MCF 10A (cell line): ENCODE measurements at regions of chr12 and their contacts with region 1.

Region 1: GRCh38 chr12:121793838-121794533 is 498 bp upstream of the RHOF start:
- DNase-seq: peak; percentile 92
- H3K4me3 Mint-ChIP-seq: peak overlapping the region; percentile 69
- H3K27ac Mint-ChIP-seq: peak overlapping the region; percentile 90
- H3K4me1 Mint-ChIP-seq: peaks cover 58% of the 10 kb centered on the region
- H3K27me3 Mint-ChIP-seq: no peaks in the 10 kb centered on the region
- CTCF ChIP-seq: peak; percentile 100

Region 2: DNA sequence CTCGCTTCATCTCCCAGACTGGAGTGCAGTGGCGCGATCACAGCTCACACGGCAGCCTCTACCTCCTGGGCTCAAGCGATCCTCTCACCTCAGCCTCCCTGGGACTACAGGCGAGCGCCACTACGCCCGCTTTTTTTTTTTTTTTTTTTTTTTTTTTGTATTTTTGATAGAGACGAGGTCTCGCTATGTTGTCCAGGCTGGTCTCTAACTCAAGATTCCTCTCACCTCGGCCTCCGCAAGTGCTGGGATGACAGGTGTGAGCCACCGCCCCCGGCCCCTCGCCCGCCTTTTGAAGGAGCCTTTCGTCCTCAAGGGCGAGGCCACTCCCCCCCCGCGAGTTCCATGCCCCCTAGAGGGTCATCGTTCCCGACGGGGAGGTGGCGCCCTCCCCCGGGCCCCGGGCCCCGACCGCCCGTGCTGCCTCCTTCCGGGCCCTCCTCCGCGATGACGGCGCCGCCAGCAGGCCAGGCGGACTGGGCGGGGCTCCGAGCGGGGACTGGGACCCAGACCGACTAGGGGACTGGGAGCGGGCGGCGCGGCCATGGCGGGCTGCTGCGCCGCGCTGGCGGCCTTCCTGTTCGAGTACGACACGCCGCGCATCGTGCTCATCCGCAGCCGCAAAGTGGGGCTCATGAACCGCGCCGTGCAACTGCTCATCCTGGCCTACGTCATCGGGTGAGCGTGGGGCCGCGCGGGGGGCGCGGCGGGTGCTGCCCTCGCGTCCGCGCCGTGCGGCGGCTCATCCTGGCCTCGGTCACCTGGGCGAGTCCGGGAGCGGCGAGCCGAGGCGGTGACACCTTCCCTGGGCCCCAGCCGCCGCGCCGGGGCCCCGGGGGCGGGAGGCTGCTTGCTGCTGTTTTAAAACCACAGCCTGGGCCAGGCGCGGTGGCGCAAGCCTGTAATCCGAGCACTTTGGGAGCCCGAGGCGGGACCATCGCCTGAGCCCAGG is 584.1 kb before region 1 on chr12 and contains the start of gene P2RX4:
- CTCF ChIA-PET with region 1: no interaction called
- POLR2A ChIA-PET with region 1: no interaction called
- intact Hi-C with region 1: no loop called
- DNase-seq: peak; percentile 83
- H3K4me3 Mint-ChIP-seq: peak within 1 kb of the TSS; percentile 72
- H3K27ac Mint-ChIP-seq: peak within 1 kb of the TSS; percentile 63
- H3K4me1 Mint-ChIP-seq: peaks cover 12% of the 10 kb centered on the region
- H3K27me3 Mint-ChIP-seq: no peaks in the 10 kb centered on the region
- CTCF ChIP-seq: peak; percentile 10
- total RNA-seq, gene P2RX4: 8.1 and 10.7 TPM in 2 replicates

Region 3: GRCh38 chr12:121427556-121428055 is 366.4 kb before region 1 on chr12:
- CTCF ChIA-PET with region 1: no interaction called
- POLR2A ChIA-PET with region 1: no interaction called
- intact Hi-C with region 1: no loop called
- DNase-seq: no peak
- H3K4me3 Mint-ChIP-seq: no peak overlapping the region
- H3K27ac Mint-ChIP-seq: no peak overlapping the region
- H3K4me1 Mint-ChIP-seq: no peaks in the 10 kb centered on the region
- H3K27me3 Mint-ChIP-seq: no peaks in the 10 kb centered on the region
- CTCF ChIP-seq: no peak

Region 4: GRCh38 chr12:121676190-121676589 is 117.8 kb before region 1 on chr12:
- CTCF ChIA-PET with region 1: no interaction called
- POLR2A ChIA-PET with region 1: no interaction called
- intact Hi-C with region 1: no loop called
- DNase-seq: no peak
- H3K4me3 Mint-ChIP-seq: no peak overlapping the region
- H3K27ac Mint-ChIP-seq: no peak overlapping the region
- H3K4me1 Mint-ChIP-seq: peaks cover 10% of the 10 kb centered on the region
- H3K27me3 Mint-ChIP-seq: no peaks in the 10 kb centered on the region
- CTCF ChIP-seq: no peak

Region 5: DNA sequence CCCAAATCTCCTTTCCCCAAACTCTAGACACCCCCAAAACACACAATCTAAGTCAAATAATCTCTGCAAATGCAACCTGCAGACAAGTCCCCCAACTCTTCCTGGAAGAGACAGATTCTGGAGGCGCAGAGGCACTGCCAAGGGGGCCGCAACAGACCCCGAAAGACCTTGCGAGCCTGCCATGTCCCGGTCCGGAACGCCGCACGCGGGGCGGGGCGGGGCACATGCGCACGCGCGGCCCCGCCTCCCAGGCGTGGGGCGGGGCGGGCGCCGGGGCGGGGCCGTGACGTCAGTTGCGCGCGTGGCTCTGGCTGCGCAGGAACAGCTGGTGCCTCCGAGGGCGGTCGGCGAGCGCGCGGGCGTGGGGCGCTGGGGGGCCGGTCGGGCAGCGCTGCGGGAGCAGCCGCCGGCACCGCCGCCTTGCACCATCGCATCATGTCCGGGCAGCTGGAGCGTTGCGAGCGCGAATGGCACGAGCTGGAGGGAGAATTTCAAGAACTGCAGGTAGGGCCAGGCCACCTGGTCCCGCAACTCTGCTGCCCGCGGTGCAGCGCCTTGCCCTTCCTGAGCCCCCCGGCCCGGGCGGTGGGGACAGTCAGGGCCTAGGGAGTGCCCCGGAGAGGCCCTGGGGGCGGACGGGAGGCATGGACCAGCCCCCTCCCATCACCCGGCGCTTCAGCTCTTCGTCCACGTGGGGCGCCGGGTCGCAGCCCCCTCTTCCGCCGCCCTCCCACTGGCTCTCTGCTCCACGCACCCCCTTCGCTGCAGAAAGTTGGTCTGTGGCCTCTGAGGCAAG is 81.3 kb before region 1 on chr12 and contains the start of gene TMEM120B:
- CTCF ChIA-PET with region 1: interaction called, 58 read pairs
- POLR2A ChIA-PET with region 1: interaction called, 26 read pairs
- intact Hi-C with region 1: no loop called
- DNase-seq: peak; percentile 70
- H3K4me3 Mint-ChIP-seq: peak within 1 kb of the TSS; percentile 95
- H3K27ac Mint-ChIP-seq: peak within 1 kb of the TSS; percentile 57
- H3K4me1 Mint-ChIP-seq: peaks cover 23% of the 10 kb centered on the region
- H3K27me3 Mint-ChIP-seq: no peaks in the 10 kb centered on the region
- CTCF ChIP-seq: no peak
- total RNA-seq, gene TMEM120B: 10.5 and 14.2 TPM in 2 replicates

Region 6: DNA sequence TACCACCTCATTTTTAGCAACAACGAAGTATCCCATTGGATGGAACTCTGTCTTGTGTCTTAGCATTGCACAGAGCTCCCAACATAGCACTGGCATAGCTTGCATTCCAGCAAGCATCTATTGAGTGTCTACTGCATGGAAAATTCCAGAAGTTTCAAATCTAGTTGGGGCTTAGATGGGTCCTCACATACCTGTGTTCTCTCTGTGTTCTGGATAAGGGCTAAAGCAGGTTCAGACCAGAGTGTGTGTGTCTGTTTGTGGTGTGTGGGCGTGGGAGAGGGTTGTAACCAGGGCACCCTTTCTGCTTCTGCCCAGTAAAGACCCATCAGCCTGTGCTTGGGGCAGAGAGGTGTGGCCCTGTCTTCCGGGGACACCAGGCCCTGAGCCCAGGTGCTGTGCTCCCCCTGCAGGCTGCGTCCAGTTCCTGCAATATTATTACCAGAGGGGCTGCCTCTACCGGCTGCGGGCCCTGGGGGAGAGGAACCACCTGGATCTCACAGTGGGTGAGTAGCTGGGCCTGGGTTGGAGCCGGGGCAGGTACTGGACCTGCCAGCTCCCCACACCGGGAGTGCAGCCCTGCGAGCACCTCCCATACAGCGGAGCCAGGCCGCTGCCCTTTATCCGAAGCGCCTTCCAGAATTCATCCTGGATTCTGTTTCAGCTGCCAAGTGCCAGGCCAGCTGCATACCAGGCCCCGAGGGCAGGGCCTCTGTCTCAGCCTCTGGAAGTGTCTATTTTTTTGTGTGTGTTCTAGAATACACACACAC is 20.8 kb before region 1 on chr12:
- CTCF ChIA-PET with region 1: interaction called, 301 read pairs
- POLR2A ChIA-PET with region 1: interaction called, 7 read pairs
- intact Hi-C with region 1: loop called (anchors 1 kb)
- DNase-seq: peak; percentile 76
- H3K4me3 Mint-ChIP-seq: no peak overlapping the region
- H3K27ac Mint-ChIP-seq: no peak overlapping the region
- H3K4me1 Mint-ChIP-seq: peaks cover 5% of the 10 kb centered on the region
- H3K27me3 Mint-ChIP-seq: no peaks in the 10 kb centered on the region
- CTCF ChIP-seq: peak; percentile 85

Region 7: DNA sequence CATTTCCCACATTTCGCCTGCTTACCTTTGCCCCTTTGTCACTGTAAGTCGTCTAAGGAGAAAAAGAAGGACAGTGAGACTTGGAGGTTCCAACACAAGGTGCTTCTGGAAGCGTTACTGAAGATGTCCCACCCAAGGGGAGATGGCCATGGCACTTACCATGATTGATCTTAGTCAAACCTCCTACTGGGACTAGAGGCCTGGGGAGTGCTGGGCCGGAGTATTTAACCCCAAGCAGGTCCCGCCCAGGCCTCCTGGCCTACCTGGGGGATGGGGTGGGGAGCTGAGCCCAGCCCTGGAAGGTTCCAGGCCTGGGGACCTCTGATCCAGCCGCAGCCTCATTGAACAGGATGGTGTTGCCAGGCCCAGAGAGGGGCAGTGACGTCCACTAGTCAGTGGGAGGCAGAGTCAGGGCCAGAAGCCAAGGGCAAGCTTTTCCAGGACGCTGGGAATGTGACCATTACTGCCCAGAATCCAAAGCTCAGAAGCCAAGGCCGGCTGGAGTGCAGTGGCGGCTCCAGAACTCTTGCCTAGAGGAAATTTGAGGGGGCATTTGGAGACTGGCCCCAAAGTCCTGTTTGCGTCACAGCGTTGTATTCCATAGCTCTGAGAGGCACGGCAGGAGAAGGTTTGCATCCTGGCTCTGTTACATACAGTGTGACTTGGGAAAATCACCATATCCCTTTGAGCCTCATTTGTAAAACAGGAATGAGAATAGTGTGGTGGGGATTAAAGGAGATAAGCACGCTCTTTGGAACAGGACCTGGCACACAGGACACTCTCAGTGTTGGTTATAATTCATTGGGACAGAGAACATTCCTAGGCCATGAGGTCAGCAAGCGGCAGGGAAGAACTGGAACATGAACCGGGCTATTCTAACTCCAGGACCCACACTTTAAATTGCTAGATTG is 64.9 kb after region 1 on chr12 and contains the start of gene HPD:
- CTCF ChIA-PET with region 1: interaction called, 11 read pairs
- POLR2A ChIA-PET with region 1: no interaction called
- intact Hi-C with region 1: no loop called
- DNase-seq: peak; percentile 78
- H3K4me3 Mint-ChIP-seq: no peak within 1 kb of the TSS
- H3K27ac Mint-ChIP-seq: no peak within 1 kb of the TSS
- H3K4me1 Mint-ChIP-seq: peaks cover 15% of the 10 kb centered on the region
- H3K27me3 Mint-ChIP-seq: no peaks in the 10 kb centered on the region
- CTCF ChIP-seq: no peak
- total RNA-seq, gene HPD: 0.21 TPM in 1 of 2 replicates, not detected in the other

Region 8: DNA sequence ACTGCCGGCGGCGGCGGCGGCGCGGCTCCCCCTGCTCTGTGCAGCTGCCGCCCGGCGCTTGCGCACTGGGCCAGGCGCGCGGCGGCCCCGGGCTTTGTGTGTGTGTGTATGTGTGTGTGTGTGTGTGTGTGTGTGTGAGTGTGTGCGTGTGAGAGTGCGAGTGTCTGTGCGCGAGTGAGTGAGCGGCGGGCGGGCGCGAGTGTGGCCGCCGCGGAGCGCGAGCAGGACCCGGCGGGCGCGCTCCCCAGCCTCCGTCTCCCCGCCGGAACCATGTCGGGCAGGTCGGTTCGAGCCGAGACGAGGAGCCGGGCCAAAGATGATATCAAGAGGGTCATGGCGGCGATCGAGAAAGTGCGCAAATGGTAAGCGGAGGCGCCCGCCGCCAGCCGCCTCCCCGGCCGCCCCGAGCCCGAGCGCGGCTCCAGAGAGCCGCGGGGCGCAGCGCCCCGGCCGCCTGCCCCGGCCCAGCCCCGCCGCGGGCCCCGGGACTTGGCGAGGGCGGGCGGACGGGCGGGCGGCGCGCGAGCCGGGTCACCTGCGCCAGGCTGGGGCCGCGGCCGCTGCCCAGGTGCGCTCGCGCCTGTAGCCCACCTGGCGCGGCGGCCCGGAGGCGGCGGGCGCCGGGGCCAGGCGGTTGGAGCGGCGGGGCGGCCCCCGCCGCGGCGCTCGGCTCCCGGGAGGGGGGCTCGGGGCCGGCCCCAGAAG is 228.0 kb after region 1 on chr12 and contains the start of gene BCL7A:
- CTCF ChIA-PET with region 1: interaction called, 12 read pairs
- POLR2A ChIA-PET with region 1: interaction called, 4 read pairs
- intact Hi-C with region 1: loop called (anchors 10 kb)
- DNase-seq: peak; percentile 60
- H3K4me3 Mint-ChIP-seq: peak within 1 kb of the TSS; percentile 94
- H3K27ac Mint-ChIP-seq: peak within 1 kb of the TSS; percentile 76
- H3K4me1 Mint-ChIP-seq: peaks cover 5% of the 10 kb centered on the region
- H3K27me3 Mint-ChIP-seq: no peaks in the 10 kb centered on the region
- CTCF ChIP-seq: no peak
- total RNA-seq, gene BCL7A: 17.9 and 18.1 TPM in 2 replicates

Region 9: GRCh38 chr12:122244565-122245371 is 450.8 kb after region 1 on chr12:
- CTCF ChIA-PET with region 1: no interaction called
- POLR2A ChIA-PET with region 1: no interaction called
- intact Hi-C with region 1: no loop called
- DNase-seq: no peak
- H3K4me3 Mint-ChIP-seq: no peak overlapping the region
- H3K27ac Mint-ChIP-seq: no peak overlapping the region
- H3K4me1 Mint-ChIP-seq: no peaks in the 10 kb centered on the region
- H3K27me3 Mint-ChIP-seq: no peaks in the 10 kb centered on the region
- CTCF ChIP-seq: no peak